ENCODE measurements at regions of chr1 and their contacts with region 1.

Region 1: GRCh38 chr1:114282751-114283403 is 129.2 kb upstream of the SYT6 start:
- DNase-seq: peak; percentile 82 to 93
- ATAC-seq: peak; percentile 94 to 100 (median 100)
- H3K4me3 ChIP-seq: no peak overlapping the region
- H3K4me3 Mint-ChIP-seq: no peak overlapping the region
- H3K27ac ChIP-seq: no peak overlapping the region
- H3K27ac Mint-ChIP-seq: no peak overlapping the region
- H3K4me1 ChIP-seq: peaks cover 8% of the 10 kb centered on the region
- H3K4me1 Mint-ChIP-seq: peaks cover 41 to 42% of the 10 kb centered on the region in 2 donors
- H3K27me3 ChIP-seq: no peaks in the 10 kb centered on the region
- H3K27me3 Mint-ChIP-seq: no peaks in the 10 kb centered on the region
- CTCF ChIP-seq: peak; percentile 81

Region 2: DNA sequence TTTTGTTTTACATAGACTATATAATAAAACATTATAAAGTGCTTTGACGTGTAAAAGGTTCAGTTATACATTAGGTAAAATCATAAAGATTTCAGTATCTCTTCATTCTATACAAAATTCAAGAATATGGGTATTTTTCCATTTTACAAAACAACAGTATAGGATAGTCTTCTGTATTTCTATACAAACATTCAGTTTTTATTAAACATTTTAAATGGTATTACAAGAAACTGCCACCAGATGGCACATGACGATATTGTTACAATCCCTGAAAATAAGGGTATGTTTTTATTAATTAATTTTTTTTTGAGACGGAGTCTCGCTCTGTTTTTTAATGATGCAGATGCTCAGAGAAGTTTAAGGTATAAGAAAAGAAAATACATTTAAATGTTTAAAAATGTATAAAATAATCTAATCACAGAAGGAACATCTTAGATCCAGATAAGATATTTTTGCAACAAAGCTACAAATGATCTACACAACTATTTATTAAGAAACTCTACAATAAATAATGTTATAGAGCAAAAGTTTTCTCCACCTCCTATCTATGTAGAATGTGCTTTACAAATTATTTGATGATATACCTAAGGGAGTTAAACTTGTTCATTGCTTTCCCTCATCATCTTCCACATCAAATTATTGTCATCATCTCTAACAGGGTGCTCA is 447.1 kb before region 1 on chr1:
- intact Hi-C with region 1: loop called (anchors 5 kb)
- DNase-seq: peak in 1 of 2 donors; percentile 83
- ATAC-seq: peak in 2 of 3 donors; percentile 53 to 67
- H3K4me3 ChIP-seq: no peak overlapping the region
- H3K4me3 Mint-ChIP-seq: no peak overlapping the region
- H3K27ac ChIP-seq: no peak overlapping the region
- H3K27ac Mint-ChIP-seq: peak overlapping the region in 1 of 2 donors; percentile 66
- H3K4me1 ChIP-seq: no peaks in the 10 kb centered on the region
- H3K4me1 Mint-ChIP-seq: no peaks in the 10 kb centered on the region
- H3K27me3 ChIP-seq: no peaks in the 10 kb centered on the region
- H3K27me3 Mint-ChIP-seq: no peaks in the 10 kb centered on the region
- CTCF ChIP-seq: peak; percentile 74

Region 3: DNA sequence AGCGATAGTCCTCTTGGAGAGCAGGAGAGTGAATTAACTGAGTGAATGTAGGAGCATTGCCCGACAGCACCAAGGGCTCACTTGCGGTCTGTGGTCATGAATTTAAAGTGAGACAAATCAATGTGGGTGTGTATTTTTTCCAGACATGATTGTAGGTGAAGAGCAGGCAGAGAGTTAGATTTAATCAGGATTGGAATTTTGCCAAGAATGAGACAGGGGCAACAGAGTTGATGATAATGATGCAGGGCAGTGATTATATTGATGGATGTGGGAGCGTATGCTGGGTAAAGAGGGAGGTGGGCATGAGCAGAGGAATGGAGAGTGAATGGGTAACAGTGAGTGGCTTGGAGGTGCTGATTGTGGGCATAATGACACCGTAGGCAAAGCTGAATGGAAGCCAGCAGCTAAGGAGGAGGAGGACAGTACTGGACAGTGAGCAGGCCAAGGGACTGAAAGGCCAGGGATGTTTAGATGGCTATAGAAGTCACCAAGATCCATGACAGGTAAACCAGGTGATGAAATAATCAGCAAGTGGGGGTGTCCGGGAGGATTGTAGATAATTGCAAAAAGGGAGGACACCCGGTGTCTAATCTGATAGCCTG is 109.1 kb before region 1 on chr1:
- intact Hi-C with region 1: no loop called
- DNase-seq: no peak
- ATAC-seq: no peak
- H3K4me3 ChIP-seq: no peak overlapping the region
- H3K4me3 Mint-ChIP-seq: no peak overlapping the region
- H3K27ac ChIP-seq: no peak overlapping the region
- H3K27ac Mint-ChIP-seq: no peak overlapping the region
- H3K4me1 ChIP-seq: no peaks in the 10 kb centered on the region
- H3K4me1 Mint-ChIP-seq: no peaks in the 10 kb centered on the region
- H3K27me3 ChIP-seq: no peaks in the 10 kb centered on the region
- H3K27me3 Mint-ChIP-seq: no peaks in the 10 kb centered on the region
- CTCF ChIP-seq: no peak